Esophagus muscularis mucosa (tissue), 4 donors: ENCODE measurements at regions of chr10 and their contacts with region 1.

Region 1: GRCh38 chr10:6416892-6417512 is 163.1 kb downstream of the PRKCQ start:
- DNase-seq: no peak
- H3K4me3 ChIP-seq: no peak overlapping the region
- H3K27ac ChIP-seq: no peak overlapping the region
- H3K4me1 ChIP-seq: no peaks in the 10 kb centered on the region
- H3K27me3 ChIP-seq: peaks cover 0 to 5% (median 0%) of the 10 kb centered on the region in 4 donors
- CTCF ChIP-seq: peak; percentile 47 to 64 (median 63)
- EP300 ChIP-seq: no peak
- POLR2A ChIP-seq: no peak

Region 2: GRCh38 chr10:6382081-6382480 is 34.9 kb before region 1 on chr10:
- intact Hi-C with region 1: no loop called
- DNase-seq: peak; percentile 89
- H3K4me3 ChIP-seq: peak overlapping the region in 1 of 4 donors; percentile 30
- H3K27ac ChIP-seq: peak overlapping the region; percentile 39 to 68 (median 64)
- H3K4me1 ChIP-seq: peaks cover 14 to 28% (median 24%) of the 10 kb centered on the region in 4 donors
- H3K27me3 ChIP-seq: no peaks in the 10 kb centered on the region
- CTCF ChIP-seq: no peak
- EP300 ChIP-seq: no peak
- POLR2A ChIP-seq: no peak

Region 3: DNA sequence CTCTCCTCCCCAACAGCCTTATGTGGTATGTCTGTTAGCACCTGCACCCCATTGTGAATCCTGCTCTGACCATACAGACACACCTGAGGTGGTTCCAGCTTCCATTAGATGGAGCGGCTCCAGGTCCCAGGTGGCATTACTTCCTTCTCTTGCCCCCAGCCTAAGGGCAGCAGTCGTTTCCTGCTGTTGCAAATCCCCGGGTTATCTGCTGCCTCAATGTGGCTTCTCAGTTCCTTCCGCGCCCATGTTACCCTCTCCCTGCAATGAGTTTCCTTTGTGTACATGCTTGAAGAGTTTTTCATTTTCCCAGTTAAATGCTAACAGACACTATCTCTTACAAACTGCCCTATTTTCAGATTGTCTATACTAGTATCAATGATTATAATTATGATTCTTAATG is 225.9 kb after region 1 on chr10:
- intact Hi-C with region 1: no loop called
- DNase-seq: no peak
- H3K4me3 ChIP-seq: no peak overlapping the region
- H3K27ac ChIP-seq: no peak overlapping the region
- H3K4me1 ChIP-seq: no peaks in the 10 kb centered on the region
- H3K27me3 ChIP-seq: peaks cover 0 to 22% (median 0%) of the 10 kb centered on the region in 4 donors
- CTCF ChIP-seq: no peak
- EP300 ChIP-seq: no peak
- POLR2A ChIP-seq: no peak

Region 4: DNA sequence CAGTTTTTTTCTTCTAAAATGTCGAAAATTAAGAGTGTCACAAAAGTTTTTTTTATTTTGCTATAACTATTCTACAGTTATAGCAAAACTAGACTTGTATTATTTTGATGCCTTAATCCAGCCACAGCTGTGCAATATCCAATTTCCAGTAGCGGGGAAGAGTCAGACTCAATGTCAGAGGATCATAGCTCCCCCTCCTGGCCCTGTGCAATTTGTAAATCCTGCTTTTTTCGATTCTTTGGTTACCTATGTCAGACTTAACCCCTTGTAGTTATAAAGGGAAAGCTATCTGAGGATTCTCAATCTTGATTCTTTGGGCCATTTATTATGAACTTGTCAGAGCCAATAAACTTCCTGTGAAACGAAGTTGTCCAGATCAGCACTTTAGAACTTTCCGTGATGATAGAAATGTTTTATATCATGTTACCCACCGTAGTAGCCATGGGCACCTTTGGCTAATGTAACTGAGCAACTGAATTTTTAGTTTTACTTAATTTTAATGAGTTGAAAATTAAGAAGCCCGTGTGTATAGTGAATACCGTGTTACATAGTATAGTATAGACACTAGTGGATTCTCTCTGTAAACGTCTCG is 250.8 kb after region 1 on chr10:
- intact Hi-C with region 1: loop called (anchors 5 kb)
- DNase-seq: no peak
- H3K4me3 ChIP-seq: no peak overlapping the region
- H3K27ac ChIP-seq: no peak overlapping the region
- H3K4me1 ChIP-seq: peaks cover 0 to 4% (median 0%) of the 10 kb centered on the region in 4 donors
- H3K27me3 ChIP-seq: peaks cover 0 to 14% (median 0%) of the 10 kb centered on the region in 4 donors
- CTCF ChIP-seq: peak; percentile 32 to 42 (median 37)
- EP300 ChIP-seq: no peak
- POLR2A ChIP-seq: no peak